Caco-2 (cell line): ENCODE measurements at regions of chr2 and their contacts with region 1.

Region 1: DNA sequence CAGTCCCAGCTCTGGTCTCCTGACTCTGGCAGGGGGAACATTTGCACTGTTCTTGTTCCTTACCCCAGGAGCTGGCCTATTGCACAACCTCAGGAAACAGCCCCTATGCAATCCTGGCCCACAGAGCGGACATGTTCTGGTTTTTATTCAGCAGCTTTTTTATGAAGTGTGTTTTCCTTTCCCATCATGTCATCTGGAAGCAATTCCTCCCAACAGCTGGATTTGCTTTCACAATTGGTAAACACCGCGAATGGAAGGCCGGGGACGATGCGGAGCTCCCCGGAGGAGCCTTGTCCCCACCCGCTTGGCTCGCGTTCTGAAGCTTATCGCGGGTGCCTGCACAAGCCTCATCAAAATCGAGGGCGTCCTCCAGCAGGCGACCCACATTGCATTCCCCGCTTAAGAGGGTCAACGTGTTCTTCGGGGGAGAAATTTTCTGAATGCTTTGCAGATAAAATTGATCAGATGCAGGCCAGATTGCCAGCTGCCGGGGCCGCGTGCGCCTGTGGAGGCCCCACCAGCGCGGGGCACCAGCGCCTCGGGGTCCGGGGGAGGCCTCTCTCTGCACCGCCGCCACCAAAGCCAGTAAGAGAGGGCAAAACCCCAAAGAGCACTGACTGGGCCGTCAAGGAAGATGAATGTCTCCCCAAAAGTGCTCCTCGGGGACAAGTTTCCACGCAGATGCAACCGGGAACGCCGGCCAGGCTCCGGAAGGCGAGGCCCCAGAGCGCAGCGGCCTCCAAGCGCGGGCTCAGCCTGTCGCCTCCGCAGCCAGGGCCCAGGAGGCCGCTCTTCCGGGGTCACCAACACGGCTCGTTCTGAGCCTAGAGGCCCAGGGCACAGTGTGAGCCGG is 60.3 kb upstream of the SP3 start:
- DNase-seq: no peak
- H3K4me3 ChIP-seq: no peak overlapping the region
- H3K4me3 Mint-ChIP-seq: peak overlapping the region; percentile 68
- H3K27ac Mint-ChIP-seq: peak overlapping the region; percentile 92
- H3K4me1 ChIP-seq: peaks cover 62% of the 10 kb centered on the region
- H3K4me1 Mint-ChIP-seq: peaks cover 58% of the 10 kb centered on the region
- H3K27me3 ChIP-seq: no peaks in the 10 kb centered on the region
- H3K27me3 Mint-ChIP-seq: no peaks in the 10 kb centered on the region
- CTCF ChIP-seq: no peak

Region 2: DNA sequence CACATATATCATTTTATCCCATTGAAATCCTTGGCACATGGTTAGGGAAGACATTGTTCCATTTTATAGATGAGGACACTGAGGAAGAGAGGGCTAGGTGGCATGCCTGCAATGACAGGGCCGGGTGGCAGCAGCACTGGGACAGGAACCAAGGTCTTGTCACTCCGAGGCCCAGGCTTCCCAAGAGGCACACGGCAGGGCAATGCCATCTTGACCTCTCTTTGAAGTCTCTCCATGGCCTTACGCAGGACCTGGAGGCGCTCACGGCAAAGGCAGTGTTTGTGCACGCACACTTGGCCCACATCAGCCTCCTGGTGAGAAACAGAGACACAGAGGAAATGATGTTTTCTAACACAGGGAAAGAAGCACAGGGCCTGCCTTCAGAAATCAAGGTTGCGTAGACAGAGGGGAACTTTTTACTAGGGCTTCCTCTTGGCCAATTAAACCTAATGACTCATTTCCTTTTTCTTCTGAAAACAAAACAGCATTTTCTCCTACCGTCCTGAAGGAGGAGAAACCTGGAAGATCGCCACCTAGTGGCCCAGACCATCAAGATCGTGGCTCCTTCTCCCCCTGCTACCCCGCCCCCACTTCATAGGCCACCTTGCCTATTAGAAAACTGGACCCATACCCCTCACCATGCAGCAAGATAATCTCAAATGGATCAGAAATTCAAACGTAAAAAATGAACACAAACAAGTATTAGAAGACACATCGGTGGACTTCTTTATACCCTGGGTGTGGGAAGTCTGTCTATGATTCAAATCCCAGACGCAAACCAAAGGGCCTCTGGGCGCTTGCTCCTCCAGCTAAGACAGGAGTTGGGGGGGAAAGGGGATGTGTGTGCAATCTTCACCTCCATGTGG is 14.3 kb after region 1 on chr2:
- CTCF ChIA-PET with region 1: no interaction called
- POLR2A ChIA-PET with region 1: no interaction called
- intact Hi-C with region 1: loop called (anchors 1 kb)
- DNase-seq: peak; percentile 87
- H3K4me3 ChIP-seq: no peak overlapping the region
- H3K4me3 Mint-ChIP-seq: no peak overlapping the region
- H3K27ac Mint-ChIP-seq: peak overlapping the region; percentile 40
- H3K4me1 ChIP-seq: peaks cover 23% of the 10 kb centered on the region
- H3K4me1 Mint-ChIP-seq: peaks cover 17% of the 10 kb centered on the region
- H3K27me3 ChIP-seq: no peaks in the 10 kb centered on the region
- H3K27me3 Mint-ChIP-seq: no peaks in the 10 kb centered on the region
- CTCF ChIP-seq: peak; percentile 78 to 82

Region 3: GRCh38 chr2:174322746-174323145 is 297.2 kb after region 1 on chr2:
- CTCF ChIA-PET with region 1: no interaction called
- POLR2A ChIA-PET with region 1: no interaction called
- intact Hi-C with region 1: no loop called
- DNase-seq: no peak
- H3K4me3 ChIP-seq: no peak overlapping the region
- H3K4me3 Mint-ChIP-seq: no peak overlapping the region
- H3K27ac Mint-ChIP-seq: no peak overlapping the region
- H3K4me1 ChIP-seq: 0 out of 2 replicates have a peak, but pooled peaks cover 2% of the 10 kb centered on the region
- H3K4me1 Mint-ChIP-seq: peaks cover 11% of the 10 kb centered on the region
- H3K27me3 ChIP-seq: no peaks in the 10 kb centered on the region
- H3K27me3 Mint-ChIP-seq: peaks cover 14% of the 10 kb centered on the region
- CTCF ChIP-seq: no peak